ENCODE measurements at regions of chr12 and their contacts with region 1.

Region 1: DNA sequence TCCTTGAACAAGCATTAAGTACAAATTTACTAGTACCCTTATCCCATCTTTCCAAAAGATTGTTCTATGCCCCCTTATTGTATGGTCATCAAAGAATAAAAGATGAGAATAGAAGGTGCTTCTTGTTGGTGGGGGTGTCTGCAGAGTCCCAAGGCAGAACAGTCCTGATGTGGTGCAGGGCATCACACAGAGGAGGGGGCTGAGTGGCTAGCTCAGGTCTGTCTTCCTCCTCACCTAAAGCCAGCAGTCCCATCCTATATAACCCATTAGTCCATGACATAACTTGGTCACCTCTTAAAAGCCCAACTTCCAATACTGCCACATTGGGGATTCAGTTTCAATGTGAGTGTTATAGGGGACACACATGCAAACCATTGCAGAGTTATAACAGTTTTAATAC is 9.9 kb downstream of the LRRC10 start:
- DNase-seq: no peak
- H3K4me3 ChIP-seq: no peak overlapping the region
- CTCF ChIP-seq: no peak

Region 2: DNA sequence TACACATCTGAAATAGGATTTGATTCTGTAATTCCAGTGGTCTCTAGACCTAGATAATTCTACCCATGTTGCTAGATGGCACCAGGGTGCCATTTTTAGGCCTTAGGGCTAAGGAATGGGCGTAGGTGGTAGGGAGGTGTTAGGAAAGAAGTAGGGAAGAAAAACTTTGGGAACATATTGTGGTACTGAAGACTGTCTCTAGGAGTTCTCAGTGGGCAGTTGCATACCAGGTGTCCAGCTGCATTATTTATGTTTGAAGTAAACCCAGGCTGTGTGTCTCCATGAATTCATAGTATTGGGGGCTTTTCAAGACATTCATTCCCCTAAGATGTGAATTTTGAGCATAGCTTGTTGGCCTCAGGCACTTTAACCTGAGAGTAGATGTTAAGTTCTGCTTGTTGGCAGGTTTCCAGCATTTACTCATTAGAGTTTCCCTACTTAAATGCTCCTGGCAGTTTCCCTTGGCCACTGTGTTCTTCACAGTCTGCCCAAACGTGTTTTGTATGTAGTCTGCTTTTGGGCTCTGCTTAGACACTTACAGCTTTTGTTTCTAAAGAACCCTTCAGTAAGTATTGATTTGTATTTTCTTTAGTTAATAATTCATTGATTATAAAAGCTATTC is 47.1 kb before region 1 on chr12:
- CTCF ChIA-PET with region 1: no interaction called
- POLR2A ChIA-PET with region 1: no interaction called
- DNase-seq: no peak
- H3K4me3 ChIP-seq: no peak overlapping the region
- CTCF ChIP-seq: no peak

Region 3: DNA sequence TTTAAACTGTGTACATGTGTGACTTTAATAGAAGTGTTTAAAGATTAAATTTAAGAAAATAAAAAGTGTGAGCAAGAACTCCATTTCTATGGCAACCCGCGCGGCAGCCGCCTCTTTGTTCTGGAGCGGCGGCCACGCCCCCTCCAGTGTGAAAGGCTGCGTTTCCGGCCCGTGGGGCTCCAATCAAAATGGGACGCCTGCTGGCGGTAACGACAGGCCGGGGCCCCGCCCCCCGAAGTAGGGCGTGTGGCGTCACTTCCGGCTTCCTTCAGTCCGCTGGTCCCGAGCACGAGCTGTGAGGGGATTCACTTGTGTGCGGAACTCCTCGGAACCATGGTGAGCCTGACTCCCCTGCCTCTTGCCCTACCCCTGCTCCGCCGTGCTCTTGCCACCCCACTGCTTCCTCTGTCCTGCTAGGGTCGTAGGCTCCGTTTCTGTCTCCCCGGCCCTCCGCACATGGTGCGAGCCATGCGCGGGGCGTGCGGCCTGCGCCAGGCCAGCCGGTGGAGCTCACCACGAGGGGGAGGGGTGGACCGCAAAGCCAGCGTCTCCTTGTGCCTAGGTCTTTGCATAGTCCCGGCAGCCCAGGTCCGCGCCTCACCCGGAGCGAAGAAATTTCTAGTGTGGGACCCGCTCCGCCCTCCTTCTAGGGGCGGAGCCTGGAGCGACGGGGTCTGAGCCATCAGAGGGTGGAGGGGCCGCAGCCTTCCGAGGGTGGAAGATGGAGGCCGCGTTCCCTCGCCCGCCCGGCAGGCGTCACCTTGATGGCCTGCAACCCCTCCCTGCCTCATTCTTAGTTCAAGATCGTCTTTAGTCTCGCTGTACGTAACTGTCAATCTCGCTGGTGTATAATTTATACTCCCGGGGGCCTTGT is 15.4 kb before region 1 on chr12 and contains the start of gene CCT2:
- CTCF ChIA-PET with region 1: interaction called, 17 read pairs
- POLR2A ChIA-PET with region 1: no interaction called
- DNase-seq: peak; percentile 52
- H3K4me3 ChIP-seq: peak within 1 kb of the TSS; percentile 100
- CTCF ChIP-seq: peak; percentile 63

Region 4: GRCh38 chr12:69719382-69720316 is 118.8 kb after region 1 on chr12:
- CTCF ChIA-PET with region 1: no interaction called
- POLR2A ChIA-PET with region 1: no interaction called
- DNase-seq: no peak
- H3K4me3 ChIP-seq: no peak overlapping the region
- CTCF ChIP-seq: no peak